H1 (cell line): ENCODE measurements at regions of chr7 and their contacts with region 1.

Region 1: GRCh38 chr7:99928994-99929729 is at the start of gene GJC3:
- DNase-seq: peak in 1 of 2 experiments; percentile 82
- H3K4me3 ChIP-seq: peak within 1 kb of the TSS; percentile 22 to 49 (median 26); a peak in 7 of 8 replicates
- H3K27ac ChIP-seq: 0 out of 2 replicates have a peak within 1 kb of the TSS, but pooled peaks have one; percentile 16
- H3K4me1 ChIP-seq: peaks cover 2 to 7% (median 4%) of the 10 kb centered on the region in 4 experiments; a peak in 5 of 7 replicates
- H3K27me3 ChIP-seq: no peaks in the 10 kb centered on the region
- CTCF ChIP-seq: peak; percentile 36 to 58 (median 57)
- EP300 ChIP-seq: no peak
- POLR2A ChIP-seq: peak in 1 of 2 experiments; percentile 40; a peak in 1 of 3 replicates
- RAD21 ChIP-seq: peak; percentile 64 to 75
- total RNA-seq, gene GJC3: 2.5 and 3.0 TPM in 2 replicates

Region 2: DNA sequence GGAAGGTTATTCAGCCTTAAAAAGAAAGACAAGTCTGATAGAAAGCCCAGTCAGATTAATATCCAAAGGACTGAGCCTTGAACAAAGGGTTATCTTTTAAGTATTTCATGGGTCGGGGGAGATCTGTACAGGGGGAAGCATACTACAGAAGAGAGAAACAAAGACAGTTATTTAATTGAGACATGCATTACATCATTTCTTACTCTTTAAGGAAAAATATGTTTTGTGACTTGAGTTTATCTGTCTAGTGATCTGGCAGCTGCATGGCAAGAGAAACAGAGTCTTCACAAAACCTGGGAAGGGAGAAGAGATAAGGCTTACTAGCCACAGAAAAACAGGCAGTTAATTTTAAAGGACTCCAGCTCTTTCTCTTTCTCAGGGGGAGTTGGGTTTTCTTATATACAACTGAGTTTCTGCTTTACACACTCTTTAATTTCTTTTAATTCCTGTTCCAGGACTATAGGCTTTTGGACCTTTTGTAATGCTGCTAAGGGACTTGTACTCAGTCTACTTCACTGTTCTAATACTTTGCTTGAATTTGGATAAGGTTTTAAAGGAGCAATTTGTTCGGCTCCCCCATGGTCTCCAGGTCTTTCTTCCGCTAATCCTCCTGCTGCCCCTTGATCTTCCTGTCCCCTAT is 122.2 kb before region 1 on chr7:
- CTCF ChIA-PET with region 1: no interaction called
- POLR2A ChIA-PET with region 1: no interaction called
- DNase-seq: no peak
- H3K4me3 ChIP-seq: no peak overlapping the region
- H3K27ac ChIP-seq: no peak overlapping the region
- H3K4me1 ChIP-seq: no peaks in the 10 kb centered on the region
- H3K27me3 ChIP-seq: no peaks in the 10 kb centered on the region
- CTCF ChIP-seq: no peak
- EP300 ChIP-seq: no peak
- POLR2A ChIP-seq: no peak
- RAD21 ChIP-seq: no peak

Region 3: GRCh38 chr7:99893280-99893679 is 35.9 kb before region 1 on chr7:
- CTCF ChIA-PET with region 1: no interaction called
- POLR2A ChIA-PET with region 1: no interaction called
- DNase-seq: no peak
- H3K4me3 ChIP-seq: no peak overlapping the region
- H3K27ac ChIP-seq: no peak overlapping the region
- H3K4me1 ChIP-seq: no peaks in the 10 kb centered on the region
- H3K27me3 ChIP-seq: no peaks in the 10 kb centered on the region
- CTCF ChIP-seq: no peak
- EP300 ChIP-seq: no peak
- POLR2A ChIP-seq: no peak
- RAD21 ChIP-seq: no peak

Region 4: GRCh38 chr7:99943641-99944496 is 14.7 kb after region 1 on chr7:
- CTCF ChIA-PET with region 1: interaction called, 13 read pairs
- POLR2A ChIA-PET with region 1: interaction called, 45 read pairs
- DNase-seq: peak; percentile 62 to 74
- H3K4me3 ChIP-seq: peak overlapping the region in 3 of 4 experiments; percentile 1 to 48 (median 4); a peak in 3 of 8 replicates
- H3K27ac ChIP-seq: peak overlapping the region; percentile 95
- H3K4me1 ChIP-seq: peaks cover 8 to 13% (median 11%) of the 10 kb centered on the region in 4 experiments; a peak in 5 of 7 replicates
- H3K27me3 ChIP-seq: no peaks in the 10 kb centered on the region; a peak in 1 of 7 replicates
- CTCF ChIP-seq: no peak
- EP300 ChIP-seq: peak in 1 of 2 experiments; percentile 90; a peak in 1 of 3 replicates
- POLR2A ChIP-seq: peak; percentile 51 to 59; a peak in 2 of 3 replicates
- RAD21 ChIP-seq: no peak

Region 5: GRCh38 chr7:99949638-99950228 is 20.6 kb after region 1 on chr7:
- CTCF ChIA-PET with region 1: interaction called, 13 read pairs
- POLR2A ChIA-PET with region 1: interaction called, 45 read pairs
- DNase-seq: no peak
- H3K4me3 ChIP-seq: no peak overlapping the region
- H3K27ac ChIP-seq: no peak overlapping the region
- H3K4me1 ChIP-seq: peaks cover 4 to 6% (median 5%) of the 10 kb centered on the region in 4 experiments; a peak in 5 of 7 replicates
- H3K27me3 ChIP-seq: no peaks in the 10 kb centered on the region
- CTCF ChIP-seq: peak in 2 of 3 experiments; percentile 35 to 49; a peak in 2 of 4 replicates
- EP300 ChIP-seq: no peak
- POLR2A ChIP-seq: no peak
- RAD21 ChIP-seq: peak; percentile 48 to 58

Region 6: GRCh38 chr7:99975782-99976521 is 46.8 kb after region 1 on chr7 and contains the start of gene AZGP1:
- CTCF ChIA-PET with region 1: interaction called, 17 read pairs
- POLR2A ChIA-PET with region 1: no interaction called
- DNase-seq: no peak
- H3K4me3 ChIP-seq: no peak within 1 kb of the TSS
- H3K27ac ChIP-seq: no peak within 1 kb of the TSS
- H3K4me1 ChIP-seq: peaks cover 0 to 4% (median under 1%) of the 10 kb centered on the region in 4 experiments; a peak in 1 of 7 replicates
- H3K27me3 ChIP-seq: no peaks in the 10 kb centered on the region
- CTCF ChIP-seq: no peak
- EP300 ChIP-seq: no peak
- POLR2A ChIP-seq: no peak
- RAD21 ChIP-seq: no peak
- total RNA-seq, gene AZGP1: 0.29 and 0.52 TPM in 2 replicates

Region 7: DNA sequence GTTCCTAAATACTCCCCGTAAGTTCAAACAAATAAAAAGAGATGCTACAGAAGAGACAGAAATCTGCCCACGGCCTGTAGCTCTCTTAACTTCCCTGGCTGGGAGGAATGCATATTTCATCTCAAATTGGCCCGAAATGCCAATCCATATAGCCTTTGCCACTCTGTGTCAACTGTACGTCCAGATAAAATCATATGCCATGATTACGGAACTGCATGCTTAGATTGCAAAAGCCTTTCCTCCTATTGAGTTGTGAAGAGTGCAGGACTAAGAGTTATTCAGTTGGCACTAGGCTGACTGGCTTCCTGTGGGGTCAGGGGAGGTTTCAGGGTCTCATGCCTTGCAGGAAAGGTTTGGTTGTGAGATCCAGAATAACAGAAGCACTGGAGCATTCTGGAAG is 56.3 kb after region 1 on chr7:
- CTCF ChIA-PET with region 1: interaction called, 27 read pairs
- POLR2A ChIA-PET with region 1: no interaction called
- DNase-seq: no peak
- H3K4me3 ChIP-seq: no peak overlapping the region
- H3K27ac ChIP-seq: no peak overlapping the region
- H3K4me1 ChIP-seq: peaks cover 0 to 3% (median 1%) of the 10 kb centered on the region in 4 experiments; a peak in 3 of 7 replicates
- H3K27me3 ChIP-seq: no peaks in the 10 kb centered on the region
- CTCF ChIP-seq: no peak
- EP300 ChIP-seq: no peak
- POLR2A ChIP-seq: no peak
- RAD21 ChIP-seq: no peak